PC-3 (cell line): ENCODE measurements at regions of chr7 and their contacts with region 1.

Region 1: GRCh38 chr7:98878365-98879165 is at the start of gene TRRAP:
- DNase-seq: peak; percentile 63
- ATAC-seq: peak; percentile 87
- H3K4me3 ChIP-seq: peak within 1 kb of the TSS; percentile 99
- H3K27ac ChIP-seq: 0 out of 2 replicates have a peak within 1 kb of the TSS, but pooled peaks have one; percentile 18
- H3K4me1 ChIP-seq: peaks cover 7% of the 10 kb centered on the region
- H3K27me3 ChIP-seq: no peaks in the 10 kb centered on the region
- CTCF ChIP-seq: peak; percentile 76
- total RNA-seq, gene TRRAP: 17.7 and 27.1 TPM in 2 replicates

Region 2: GRCh38 chr7:98902523-98902922 is 24.0 kb after region 1 on chr7:
- CTCF ChIA-PET with region 1: no interaction called
- POLR2A ChIA-PET with region 1: no interaction called
- intact Hi-C with region 1: no loop called
- DNase-seq: no peak
- ATAC-seq: no peak
- H3K4me3 ChIP-seq: no peak overlapping the region
- H3K27ac ChIP-seq: no peak overlapping the region
- H3K4me1 ChIP-seq: no peaks in the 10 kb centered on the region
- H3K27me3 ChIP-seq: no peaks in the 10 kb centered on the region
- CTCF ChIP-seq: no peak

Region 3: GRCh38 chr7:98913612-98914011 is 35.0 kb after region 1 on chr7:
- CTCF ChIA-PET with region 1: no interaction called
- POLR2A ChIA-PET with region 1: no interaction called
- intact Hi-C with region 1: loop called (anchors 1 kb)
- DNase-seq: peak; percentile 48
- ATAC-seq: peak; percentile 98
- H3K4me3 ChIP-seq: no peak overlapping the region
- H3K27ac ChIP-seq: no peak overlapping the region
- H3K4me1 ChIP-seq: peaks cover 6% of the 10 kb centered on the region; the same call in 1 of the 2 replicates
- H3K27me3 ChIP-seq: no peaks in the 10 kb centered on the region
- CTCF ChIP-seq: peak; percentile 46; the same call in 1 of the 2 replicates